Testis (tissue), 5 donors: ENCODE measurements at regions of chr12 and their contacts with region 1.

Region 1: DNA sequence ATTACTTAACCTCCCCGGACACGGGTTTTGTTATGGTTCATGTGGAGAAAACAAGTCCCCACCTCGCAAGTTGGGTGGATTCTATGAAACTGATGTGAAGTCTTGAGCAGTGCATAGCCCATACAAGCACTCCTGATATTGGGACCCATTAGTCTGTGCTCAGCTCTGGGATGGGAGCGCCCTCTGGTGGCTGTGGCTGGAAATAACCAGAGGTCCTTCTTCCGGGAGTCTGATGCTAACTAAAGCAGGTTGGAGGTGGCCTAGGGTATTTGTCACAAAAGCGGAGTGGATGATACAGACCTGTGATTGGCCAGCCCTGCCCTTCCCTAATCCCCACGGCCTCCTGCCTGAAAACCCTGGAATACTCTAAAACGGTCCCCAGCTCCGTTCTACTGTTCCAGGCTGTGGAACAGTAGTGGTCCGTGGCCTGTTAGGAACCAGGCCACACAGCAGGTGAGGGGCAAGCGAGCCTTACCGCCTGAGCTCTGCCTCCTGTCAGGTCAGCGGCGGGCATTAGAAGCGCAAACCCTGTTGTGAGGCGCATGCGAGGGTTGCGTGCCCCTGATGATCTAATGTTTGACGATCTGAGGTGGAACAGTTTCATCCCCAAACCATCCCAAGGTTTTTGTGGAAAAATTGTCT is 6.4 kb downstream of the SLC48A1 start:
- DNase-seq: peak; percentile 94
- H3K4me3 ChIP-seq: no peak overlapping the region
- H3K27ac ChIP-seq: peak overlapping the region in 1 of 2 donors; percentile 17
- H3K4me1 ChIP-seq: peaks cover 46% of the 10 kb centered on the region
- H3K27me3 ChIP-seq: no peaks in the 10 kb centered on the region
- CTCF ChIP-seq: peak; percentile 91 to 98 (median 98)
- POLR2A ChIP-seq: no peak

Region 2: DNA sequence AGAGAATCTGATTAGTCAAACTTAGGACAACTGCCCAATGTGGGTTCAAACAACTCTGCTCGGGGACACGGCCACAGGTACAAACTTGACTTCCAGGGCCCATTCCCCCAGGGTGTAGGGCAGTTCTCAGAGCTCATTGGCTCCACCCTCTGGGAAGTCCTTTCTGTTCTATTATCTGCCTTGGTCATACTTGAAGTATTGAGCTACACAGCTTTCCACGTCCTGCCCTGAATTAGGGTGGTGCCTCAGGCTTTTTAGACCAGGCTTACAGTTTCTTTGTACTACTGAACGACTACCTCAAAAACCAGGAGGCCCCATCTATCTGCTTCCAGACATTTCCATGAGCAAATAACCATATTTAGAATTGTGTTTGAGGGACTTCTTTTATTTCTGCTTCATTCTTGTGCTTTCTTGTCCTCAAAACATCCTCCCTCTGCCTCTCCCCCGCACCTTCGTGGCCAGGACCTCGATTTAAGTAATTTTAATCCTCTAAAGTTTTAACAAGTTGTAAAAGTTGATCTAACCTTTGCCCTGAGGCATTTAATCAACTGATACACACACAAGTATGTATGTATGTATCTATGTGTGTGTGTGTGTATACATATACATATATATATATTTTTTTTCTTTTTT is 417.9 kb before region 1 on chr12:
- intact Hi-C with region 1: no loop called
- DNase-seq: peak; percentile 34
- H3K4me3 ChIP-seq: no peak overlapping the region
- H3K27ac ChIP-seq: no peak overlapping the region
- H3K4me1 ChIP-seq: no peaks in the 10 kb centered on the region
- H3K27me3 ChIP-seq: no peaks in the 10 kb centered on the region
- CTCF ChIP-seq: no peak
- POLR2A ChIP-seq: no peak

Region 3: DNA sequence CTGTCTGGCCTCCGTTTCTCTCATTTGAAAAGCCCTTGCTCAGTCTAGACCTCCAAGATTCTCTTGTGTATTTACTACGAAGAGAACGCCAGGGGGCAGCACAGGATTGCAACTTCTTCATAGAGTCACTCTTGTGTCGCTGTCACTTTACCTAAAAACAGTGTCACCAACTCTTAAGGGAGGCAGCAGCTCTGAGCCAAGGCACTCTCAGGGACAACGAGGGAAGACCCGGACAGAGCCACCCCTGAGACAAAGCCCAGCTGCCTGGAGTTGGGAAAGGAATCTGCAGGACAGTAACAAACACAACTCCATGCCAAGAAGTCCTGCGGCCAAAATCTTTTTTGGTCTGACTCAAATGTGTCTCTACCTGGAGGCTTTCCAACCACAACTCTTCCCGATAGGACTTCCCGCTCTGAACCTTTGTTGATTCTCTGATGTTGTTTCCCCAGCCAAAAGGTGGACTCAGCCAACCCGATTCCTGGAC is 64.0 kb before region 1 on chr12:
- intact Hi-C with region 1: loop called (anchors 10 kb)
- DNase-seq: peak; percentile 83
- H3K4me3 ChIP-seq: no peak overlapping the region
- H3K27ac ChIP-seq: peak overlapping the region; percentile 76 to 92
- H3K4me1 ChIP-seq: peaks cover 36% of the 10 kb centered on the region
- H3K27me3 ChIP-seq: no peaks in the 10 kb centered on the region
- CTCF ChIP-seq: peak; percentile 65 to 93 (median 92)
- POLR2A ChIP-seq: no peak